Endothelial cell of umbilical vein (primary cell): ENCODE measurements at regions of chr6 and their contacts with region 1.

Region 1: DNA sequence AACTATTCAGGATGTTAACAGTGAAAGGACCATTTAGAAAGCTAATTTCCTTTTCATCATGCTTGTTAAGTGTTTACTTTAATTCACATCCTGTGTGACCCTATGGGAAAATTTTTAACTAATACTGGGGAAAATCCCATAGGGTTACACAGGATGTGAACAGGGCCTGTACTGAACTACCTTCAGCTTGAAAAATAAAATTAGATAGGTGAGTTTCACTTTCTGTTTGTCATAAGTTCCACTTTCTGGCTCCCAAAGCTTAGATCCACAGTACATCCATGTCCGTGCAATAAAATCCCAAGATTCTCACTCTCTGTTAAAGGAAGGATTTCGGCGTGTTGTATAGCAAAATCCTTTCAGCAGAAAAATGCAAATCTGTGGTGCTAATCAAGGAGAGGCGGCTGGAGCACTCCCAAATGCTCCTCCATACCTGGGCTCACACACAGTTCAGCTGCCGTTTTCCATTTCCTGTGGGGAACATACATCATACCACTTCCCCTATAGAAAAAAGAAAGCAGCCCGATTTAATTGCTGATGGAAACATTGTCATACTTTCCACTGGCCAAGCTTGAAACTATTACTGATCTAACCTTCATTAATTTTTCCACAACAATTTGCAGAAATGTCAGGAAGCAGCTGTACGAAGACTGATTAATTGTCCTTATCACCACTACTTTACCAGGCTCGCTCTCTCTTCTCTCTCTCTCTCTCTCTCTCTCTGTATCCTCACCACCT is 125.2 kb downstream of the HIVEP2 start:
- DNase-seq: peak; percentile 95
- H3K4me3 ChIP-seq: peak overlapping the region; percentile 16 to 71 (median 27)
- H3K27ac ChIP-seq: peak overlapping the region; percentile 93
- H3K4me1 ChIP-seq: peaks cover 16% of the 10 kb centered on the region
- H3K27me3 ChIP-seq: no peaks in the 10 kb centered on the region
- CTCF ChIP-seq: no peak
- POLR2A ChIP-seq: no peak

Region 2: GRCh38 chr6:142728910-142729481 is 90.8 kb before region 1 on chr6:
- CTCF ChIA-PET with region 1: no interaction called
- POLR2A ChIA-PET with region 1: no interaction called
- dilution Hi-C with region 1: no loop called
- intact Hi-C with region 1: loop called (anchors 1 kb)
- DNase-seq: peak; percentile 95
- H3K4me3 ChIP-seq: peak overlapping the region in 1 of 3 experiments; percentile 25
- H3K27ac ChIP-seq: peak overlapping the region; percentile 16
- H3K4me1 ChIP-seq: peaks cover 19% of the 10 kb centered on the region
- H3K27me3 ChIP-seq: peaks cover 0 to 9% of the 10 kb centered on the region in 2 experiments
- CTCF ChIP-seq: no peak
- POLR2A ChIP-seq: no peak

Region 3: DNA sequence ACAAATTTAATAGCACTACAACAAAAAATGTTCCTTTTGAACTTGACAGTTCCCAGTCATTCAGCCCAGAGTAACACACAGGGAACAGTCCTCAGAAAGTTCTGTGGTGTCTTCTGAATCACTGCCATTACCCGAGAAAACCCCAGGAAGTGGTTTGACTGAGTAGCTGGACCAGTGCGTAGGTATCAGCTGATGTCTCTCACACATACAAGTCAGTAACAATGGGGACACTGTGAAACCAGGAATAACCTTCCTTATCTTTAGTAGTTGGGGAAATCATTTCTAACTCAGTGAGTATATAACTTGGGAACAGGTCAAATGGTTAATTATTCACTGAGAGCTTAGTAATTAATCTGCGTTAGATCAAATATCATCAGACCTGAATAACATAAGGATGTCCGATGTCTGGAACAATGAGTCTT is 52.2 kb after region 1 on chr6:
- CTCF ChIA-PET with region 1: interaction called, 5 read pairs
- POLR2A ChIA-PET with region 1: no interaction called
- dilution Hi-C with region 1: no loop called
- intact Hi-C with region 1: loop called (anchors 1 kb)
- DNase-seq: peak; percentile 90
- H3K4me3 ChIP-seq: no peak overlapping the region
- H3K27ac ChIP-seq: peak overlapping the region; percentile 59
- H3K4me1 ChIP-seq: peaks cover 40% of the 10 kb centered on the region
- H3K27me3 ChIP-seq: no peaks in the 10 kb centered on the region
- CTCF ChIP-seq: no peak
- POLR2A ChIP-seq: no peak

Region 4: DNA sequence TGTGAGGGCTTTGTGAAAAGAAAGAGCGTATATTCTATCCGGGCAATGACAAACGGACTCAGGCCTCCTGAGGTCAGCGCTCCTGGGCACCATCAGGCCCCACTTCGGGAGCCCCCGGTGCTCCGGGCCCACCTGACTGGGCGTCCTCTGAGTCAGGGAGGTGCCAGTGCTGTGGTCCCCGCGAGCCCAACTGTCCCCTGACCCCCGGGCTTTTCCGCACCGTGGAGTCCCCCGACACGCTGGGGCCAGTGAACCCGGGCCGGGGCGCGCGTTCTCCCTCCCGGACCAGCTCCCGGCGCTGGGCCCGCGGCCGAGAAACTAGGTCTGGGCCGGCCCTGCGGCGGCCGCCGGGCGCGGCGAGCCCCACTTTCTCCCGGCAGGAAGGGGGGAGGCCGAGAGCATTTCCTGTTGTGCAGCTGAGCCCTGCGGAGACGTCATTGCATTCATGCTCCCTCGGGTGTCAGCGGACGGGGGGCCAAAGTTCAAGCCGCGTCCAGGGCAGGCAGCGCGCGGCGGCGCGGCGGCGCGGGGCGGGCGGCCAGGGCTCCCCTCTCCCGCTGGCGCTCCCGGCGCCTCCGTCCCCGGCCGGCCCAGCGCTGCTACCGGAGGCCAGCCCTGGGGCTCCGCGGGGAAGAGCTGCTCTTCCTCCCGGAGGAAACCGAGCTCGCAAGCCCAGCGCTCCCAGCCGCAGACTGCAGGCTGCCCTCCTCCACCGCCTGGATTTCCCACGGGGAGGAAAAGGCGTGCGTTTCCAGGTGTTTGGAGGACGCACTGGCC is 106.9 kb after region 1 on chr6:
- CTCF ChIA-PET with region 1: interaction called, 3 read pairs
- POLR2A ChIA-PET with region 1: no interaction called
- dilution Hi-C with region 1: no loop called
- intact Hi-C with region 1: loop called (anchors 1 kb)
- DNase-seq: peak; percentile 82
- H3K4me3 ChIP-seq: peak overlapping the region; percentile 47 to 76 (median 60)
- H3K27ac ChIP-seq: peak overlapping the region; percentile 79
- H3K4me1 ChIP-seq: peaks cover 16% of the 10 kb centered on the region
- H3K27me3 ChIP-seq: no peaks in the 10 kb centered on the region
- CTCF ChIP-seq: no peak
- POLR2A ChIP-seq: peak; percentile 34